ENCODE measurements at regions of chr12 and their contacts with region 1.

Region 1: GRCh38 chr12:109844983-109845823 is 12.0 kb upstream of the TRPV4 start:
- DNase-seq: peak; percentile 93
- H3K4me3 Mint-ChIP-seq: peak overlapping the region; percentile 31
- H3K27ac Mint-ChIP-seq: no peak overlapping the region
- H3K4me1 Mint-ChIP-seq: peaks cover 4% of the 10 kb centered on the region
- H3K27me3 Mint-ChIP-seq: no peaks in the 10 kb centered on the region

Region 2: GRCh38 chr12:109597795-109598427 is 247.3 kb before region 1 on chr12:
- CTCF ChIA-PET with region 1: interaction called, 11 read pairs
- POLR2A ChIA-PET with region 1: no interaction called
- intact Hi-C with region 1: no loop called
- DNase-seq: peak; percentile 75
- H3K4me3 Mint-ChIP-seq: no peak overlapping the region
- H3K27ac Mint-ChIP-seq: no peak overlapping the region
- H3K4me1 Mint-ChIP-seq: peaks cover 33% of the 10 kb centered on the region
- H3K27me3 Mint-ChIP-seq: no peaks in the 10 kb centered on the region

Region 3: GRCh38 chr12:109833307-109834189 is 11.7 kb before region 1 on chr12 and contains the start of gene TRPV4:
- CTCF ChIA-PET with region 1: interaction called, 20 read pairs
- POLR2A ChIA-PET with region 1: interaction called, 3 read pairs
- intact Hi-C with region 1: no loop called
- DNase-seq: no peak
- H3K4me3 Mint-ChIP-seq: no peak within 1 kb of the TSS
- H3K27ac Mint-ChIP-seq: no peak within 1 kb of the TSS
- H3K4me1 Mint-ChIP-seq: peaks cover 4% of the 10 kb centered on the region
- H3K27me3 Mint-ChIP-seq: peaks cover 17% of the 10 kb centered on the region
- total RNA-seq, gene TRPV4: not detected

Region 4: GRCh38 chr12:109870648-109871047 is 25.4 kb after region 1 on chr12:
- CTCF ChIA-PET with region 1: interaction called, 12 read pairs
- POLR2A ChIA-PET with region 1: no interaction called
- intact Hi-C with region 1: no loop called
- DNase-seq: no peak
- H3K4me3 Mint-ChIP-seq: no peak overlapping the region
- H3K27ac Mint-ChIP-seq: no peak overlapping the region
- H3K4me1 Mint-ChIP-seq: peaks cover 30% of the 10 kb centered on the region
- H3K27me3 Mint-ChIP-seq: no peaks in the 10 kb centered on the region

Region 5: DNA sequence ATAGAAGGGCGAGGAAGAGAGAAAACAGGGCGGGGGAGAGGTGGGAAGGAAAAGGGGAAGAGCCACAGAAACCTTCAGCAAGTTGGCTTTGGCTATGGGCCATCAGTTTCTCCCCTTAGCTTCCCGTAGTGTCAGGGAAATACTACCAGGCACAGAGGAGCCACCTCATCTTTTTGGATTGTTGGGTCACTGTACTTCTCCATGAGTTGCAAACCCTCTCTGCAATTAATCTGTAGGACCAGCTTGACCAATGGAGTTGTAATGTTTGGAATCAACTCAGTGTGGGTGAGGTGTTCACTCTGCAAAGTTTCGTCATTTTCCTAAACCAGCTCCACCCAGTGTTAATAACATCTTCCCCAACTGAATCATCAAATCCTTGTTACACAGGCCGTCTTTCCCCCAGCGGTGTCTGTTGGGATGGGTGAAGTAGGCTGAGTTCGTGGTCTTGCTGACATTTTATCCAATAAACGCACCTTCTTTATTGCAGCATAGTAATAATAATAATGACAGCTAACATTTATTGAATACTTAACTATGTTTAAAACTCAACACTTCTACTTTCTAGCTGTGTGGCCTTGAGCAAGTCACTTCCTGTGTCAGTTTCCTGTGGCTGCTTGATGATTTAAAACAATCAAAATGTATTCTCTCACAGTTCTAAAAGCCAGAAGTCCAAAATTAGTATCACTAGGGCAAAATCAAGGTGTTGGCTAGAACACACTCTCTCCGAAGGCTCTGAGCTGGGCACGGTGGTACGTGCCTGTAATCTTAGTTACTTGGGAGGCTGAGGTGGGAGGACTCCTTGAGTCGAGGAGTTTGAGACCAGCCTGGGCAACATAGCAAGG is 43.2 kb after region 1 on chr12:
- CTCF ChIA-PET with region 1: interaction called, 12 read pairs
- POLR2A ChIA-PET with region 1: no interaction called
- intact Hi-C with region 1: no loop called
- DNase-seq: peak; percentile 66
- H3K4me3 Mint-ChIP-seq: peak overlapping the region; percentile 27
- H3K27ac Mint-ChIP-seq: peak overlapping the region; percentile 94
- H3K4me1 Mint-ChIP-seq: peaks cover 38% of the 10 kb centered on the region
- H3K27me3 Mint-ChIP-seq: no peaks in the 10 kb centered on the region